Activated CD4-positive, alpha-beta memory T cell treated with anti-CD3 and anti-CD28 coated beads for 36 hours (primary cell): ENCODE measurements at regions of chr3 and their contacts with region 1.

Region 1: DNA sequence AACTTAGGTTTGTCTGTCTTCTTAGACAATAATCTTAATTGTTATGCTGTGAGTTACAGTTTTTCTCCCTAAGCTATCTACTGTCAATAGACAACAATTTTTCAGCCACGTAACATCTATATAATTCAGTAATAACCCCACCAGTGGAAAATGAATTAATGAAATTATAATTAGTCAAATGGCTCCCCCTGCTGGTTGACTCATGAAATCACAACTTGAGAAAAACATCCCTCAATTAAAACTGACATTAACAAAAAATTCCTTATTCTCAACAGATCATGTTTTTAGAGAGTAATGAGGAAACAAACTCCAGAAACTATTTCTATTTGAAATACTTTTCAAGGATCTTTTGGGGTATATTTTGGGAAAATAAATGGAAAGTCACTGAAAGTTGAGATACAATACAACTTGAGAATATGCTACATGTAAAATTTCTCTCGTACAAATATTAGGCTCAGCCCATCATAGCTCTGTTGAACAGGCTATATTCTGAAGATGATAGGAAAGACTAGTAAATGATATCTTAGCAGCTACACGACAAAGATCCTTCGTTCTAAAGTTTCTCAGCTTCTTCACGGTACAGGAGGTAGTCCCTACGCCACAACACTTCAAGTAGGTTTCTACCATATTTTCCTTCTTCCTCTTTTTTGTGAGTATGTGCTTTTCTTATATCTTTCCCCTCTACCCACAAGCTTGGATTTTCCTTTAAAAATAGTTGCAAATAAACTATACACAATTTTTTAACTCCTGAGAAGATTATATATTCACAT is 20.7 kb downstream of the PPP1R2 start:
- DNase-seq: no peak
- H3K4me3 Mint-ChIP-seq: no peak overlapping the region
- H3K27ac Mint-ChIP-seq: peak overlapping the region; percentile 30
- H3K4me1 Mint-ChIP-seq: peaks cover 37% of the 10 kb centered on the region
- H3K27me3 Mint-ChIP-seq: no peaks in the 10 kb centered on the region

Region 2: DNA sequence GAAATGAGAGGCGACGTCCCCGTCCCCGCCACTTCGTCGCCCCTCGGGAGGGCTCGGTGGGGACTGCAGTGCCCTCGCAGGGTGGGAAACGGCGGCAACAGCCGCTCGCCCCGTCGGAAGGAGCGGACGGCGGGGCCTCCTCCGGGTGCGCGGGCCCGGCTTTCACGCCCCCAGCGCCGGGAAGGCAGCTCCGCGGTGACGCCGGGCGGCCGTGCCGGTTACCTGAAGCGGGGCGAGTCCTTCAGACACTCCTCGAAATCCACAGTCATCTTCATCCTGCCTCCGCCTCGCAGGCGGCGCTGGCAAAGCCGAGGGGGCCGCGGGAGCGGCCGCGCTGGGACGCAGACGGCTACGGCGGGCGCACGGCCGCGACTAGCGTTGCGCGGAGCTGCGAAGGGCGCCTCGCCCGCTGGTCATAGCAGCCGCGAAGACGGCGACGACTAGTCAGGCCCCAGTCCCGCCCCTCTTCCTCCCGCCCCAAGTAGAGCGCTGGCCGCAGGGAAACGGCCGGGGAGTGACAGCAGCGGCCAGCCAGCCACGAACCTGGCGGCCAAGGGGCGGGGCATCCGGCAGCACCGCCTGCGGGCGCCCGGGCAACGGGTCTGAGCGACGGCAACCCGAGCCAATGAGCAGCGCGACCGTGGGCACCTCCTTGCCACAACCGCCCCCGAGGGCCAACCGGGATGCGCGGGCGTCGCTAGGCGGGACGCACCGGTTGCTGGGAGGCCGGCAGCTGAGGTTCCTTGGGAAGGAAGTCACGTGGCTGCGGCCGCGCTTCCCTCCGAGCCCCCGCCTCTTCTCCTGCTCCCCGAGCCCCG is 79.7 kb before region 1 on chr3 and contains the start of gene ACAP2:
- CTCF ChIA-PET with region 1: no interaction called
- POLR2A ChIA-PET with region 1: interaction called, 5 read pairs
- intact Hi-C with region 1: loop called (anchors 2 kb)
- DNase-seq: peak; percentile 99
- H3K4me3 Mint-ChIP-seq: peak within 1 kb of the TSS; percentile 92
- H3K27ac Mint-ChIP-seq: peak within 1 kb of the TSS; percentile 91
- H3K4me1 Mint-ChIP-seq: peaks cover 39% of the 10 kb centered on the region
- H3K27me3 Mint-ChIP-seq: no peaks in the 10 kb centered on the region
- total RNA-seq, gene ACAP2: 45.0 to 47.0 TPM

Region 3: DNA sequence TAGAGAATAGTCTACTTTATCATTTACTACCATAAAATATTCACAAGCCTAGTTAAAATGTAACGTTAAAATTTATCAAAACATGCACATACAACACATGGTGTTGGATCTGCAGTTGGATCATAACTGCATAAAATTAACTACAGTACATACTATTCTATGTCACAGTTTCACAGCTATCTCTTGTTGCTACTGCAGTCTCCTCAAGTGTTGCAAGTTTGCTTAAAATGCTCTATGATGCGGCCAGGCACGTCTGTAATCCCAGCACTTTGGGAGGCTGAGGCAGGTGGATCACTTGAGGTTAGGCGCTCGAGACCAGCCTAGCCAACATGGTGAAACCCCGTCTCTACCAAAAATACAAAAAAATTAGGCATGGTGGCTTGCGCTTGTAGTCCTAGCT is 10.4 kb after region 1 on chr3:
- CTCF ChIA-PET with region 1: interaction called, 17 read pairs
- POLR2A ChIA-PET with region 1: interaction called, 12 read pairs
- intact Hi-C with region 1: loop called (anchors 1 kb)
- DNase-seq: no peak
- H3K4me3 Mint-ChIP-seq: no peak overlapping the region
- H3K27ac Mint-ChIP-seq: peak overlapping the region; percentile 7
- H3K4me1 Mint-ChIP-seq: peaks cover 72% of the 10 kb centered on the region
- H3K27me3 Mint-ChIP-seq: no peaks in the 10 kb centered on the region